Activated naive CD4-positive, alpha-beta T cell treated with anti-CD3 and anti-CD28 coated beads for 36 hours (primary cell): ENCODE measurements at regions of chr3 and their contacts with region 1.

Region 1: GRCh38 chr3:186241910-186242821 is 119.9 kb downstream of the DGKG start:
- DNase-seq: peak; percentile 87
- H3K4me3 Mint-ChIP-seq: peak overlapping the region; percentile 17
- H3K27ac Mint-ChIP-seq: no peak overlapping the region
- H3K4me1 Mint-ChIP-seq: peaks cover 7% of the 10 kb centered on the region
- H3K27me3 Mint-ChIP-seq: peaks cover 7% of the 10 kb centered on the region

Region 2: GRCh38 chr3:185488465-185488864 is 753.7 kb before region 1 on chr3:
- CTCF ChIA-PET with region 1: no interaction called
- intact Hi-C with region 1: no loop called
- DNase-seq: no peak
- H3K4me3 Mint-ChIP-seq: no peak overlapping the region
- H3K27ac Mint-ChIP-seq: no peak overlapping the region
- H3K4me1 Mint-ChIP-seq: peaks cover 2% of the 10 kb centered on the region
- H3K27me3 Mint-ChIP-seq: no peaks in the 10 kb centered on the region

Region 3: DNA sequence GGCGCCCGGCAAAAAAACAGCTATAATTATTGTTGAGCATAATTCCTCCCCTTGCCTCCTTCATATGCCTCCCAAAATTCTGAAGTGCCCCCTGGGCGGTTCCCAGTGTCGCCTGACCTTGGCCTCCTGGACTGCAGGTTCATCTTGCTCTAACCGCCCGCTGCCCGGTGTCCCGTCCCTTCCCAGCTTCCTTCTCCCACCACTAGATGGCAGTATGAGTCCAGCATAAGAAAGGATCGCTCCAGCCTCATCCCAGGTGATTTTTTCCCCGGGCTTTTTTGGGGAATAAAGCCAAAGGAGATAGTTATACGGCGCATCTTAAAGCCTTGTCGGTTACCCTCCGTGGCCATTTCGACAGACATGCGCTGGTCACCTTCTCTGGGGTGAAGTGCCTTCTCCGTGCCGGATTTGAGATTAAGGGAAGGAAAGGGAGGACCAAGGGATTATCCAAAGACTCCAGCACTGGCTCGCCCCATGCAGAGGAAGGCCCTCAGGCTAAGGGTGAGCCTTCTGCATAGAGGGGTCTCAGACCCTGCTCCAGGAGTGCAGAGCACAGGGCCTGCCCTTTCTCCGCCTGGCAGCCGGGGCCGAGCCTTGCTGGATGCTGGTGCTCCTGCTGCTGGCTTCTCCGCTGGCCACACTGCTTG is 258.5 kb before region 1 on chr3:
- CTCF ChIA-PET with region 1: interaction called, 23 read pairs
- intact Hi-C with region 1: loop called (anchors 1 kb)
- DNase-seq: peak; percentile 67
- H3K4me3 Mint-ChIP-seq: no peak overlapping the region
- H3K27ac Mint-ChIP-seq: peak overlapping the region; percentile 41
- H3K4me1 Mint-ChIP-seq: peaks cover 3% of the 10 kb centered on the region
- H3K27me3 Mint-ChIP-seq: peaks cover 8% of the 10 kb centered on the region

Region 4: DNA sequence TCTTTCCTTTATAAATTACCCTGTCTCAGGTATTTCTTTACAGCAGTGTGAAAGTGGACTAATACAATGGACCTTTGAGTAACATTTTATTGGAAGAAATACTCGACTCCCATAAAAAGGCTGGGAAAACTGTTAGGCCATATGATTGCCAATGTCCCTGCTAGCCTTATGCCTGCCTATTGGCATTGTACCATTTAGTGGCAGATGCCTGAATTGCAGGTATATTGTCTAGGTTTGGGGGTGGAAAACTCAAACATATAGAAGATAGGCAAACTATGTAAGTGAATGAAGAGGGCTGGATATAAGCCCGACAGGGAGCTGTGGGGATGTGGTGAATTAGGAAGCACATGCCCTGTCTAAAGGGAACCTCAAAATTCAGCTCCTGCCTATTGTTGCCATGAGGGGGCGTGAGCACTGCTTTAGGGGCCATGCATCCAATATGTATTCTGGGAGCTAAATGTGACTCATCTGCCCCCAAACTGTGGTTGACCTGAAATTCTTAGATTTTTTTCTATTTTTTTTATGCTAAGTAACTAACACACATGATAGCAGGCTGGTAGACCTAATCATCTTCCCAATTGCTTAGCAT is 239.2 kb before region 1 on chr3:
- CTCF ChIA-PET with region 1: no interaction called
- intact Hi-C with region 1: loop called (anchors 1 kb)
- DNase-seq: peak; percentile 36
- H3K4me3 Mint-ChIP-seq: no peak overlapping the region
- H3K27ac Mint-ChIP-seq: no peak overlapping the region
- H3K4me1 Mint-ChIP-seq: peaks cover 7% of the 10 kb centered on the region
- H3K27me3 Mint-ChIP-seq: peaks cover 11% of the 10 kb centered on the region

Region 5: GRCh38 chr3:186067360-186068242 is 174.6 kb before region 1 on chr3:
- CTCF ChIA-PET with region 1: interaction called, 5 read pairs
- intact Hi-C with region 1: loop called (anchors 5 kb)
- DNase-seq: no peak
- H3K4me3 Mint-ChIP-seq: peak overlapping the region; percentile 62
- H3K27ac Mint-ChIP-seq: peak overlapping the region; percentile 57
- H3K4me1 Mint-ChIP-seq: peaks cover 15% of the 10 kb centered on the region
- H3K27me3 Mint-ChIP-seq: peaks cover 7% of the 10 kb centered on the region

Region 6: DNA sequence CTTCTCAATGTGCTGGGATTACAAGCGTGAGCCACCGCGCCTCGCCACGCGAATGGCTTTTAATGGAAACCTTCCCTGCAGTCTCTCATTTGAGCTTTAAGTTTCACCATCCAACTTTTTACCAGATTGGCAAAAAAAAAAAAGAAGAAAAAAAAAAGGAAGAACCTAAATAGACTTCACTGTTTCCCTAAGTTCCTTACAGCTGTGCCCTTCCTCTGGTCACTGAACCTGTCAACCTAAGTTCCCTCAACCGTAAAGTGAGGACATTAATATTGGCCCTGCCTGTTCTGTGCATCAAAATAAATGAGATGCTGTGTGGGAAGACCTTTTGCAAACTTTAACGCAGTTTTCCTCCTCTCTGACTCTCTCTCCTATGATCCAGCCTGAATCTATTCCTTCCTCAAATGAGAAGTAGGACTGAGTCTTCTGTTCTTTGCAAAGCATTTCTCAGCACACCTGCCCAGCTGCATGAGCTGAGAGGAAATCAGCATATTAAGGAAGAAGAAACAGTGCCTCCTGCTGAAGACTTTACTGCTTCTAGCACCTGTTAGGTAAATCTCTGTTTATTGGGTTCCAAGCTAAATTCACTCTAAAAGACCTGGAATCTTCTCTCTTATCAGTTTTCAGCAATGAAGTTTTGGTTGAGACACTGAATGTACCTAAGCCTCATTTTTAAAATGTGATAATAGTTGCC is 33.7 kb before region 1 on chr3:
- CTCF ChIA-PET with region 1: no interaction called
- intact Hi-C with region 1: no loop called
- DNase-seq: no peak
- H3K4me3 Mint-ChIP-seq: no peak overlapping the region
- H3K27ac Mint-ChIP-seq: no peak overlapping the region
- H3K4me1 Mint-ChIP-seq: no peaks in the 10 kb centered on the region
- H3K27me3 Mint-ChIP-seq: peaks cover 3% of the 10 kb centered on the region

Region 7: GRCh38 chr3:186342197-186342596 is 100.0 kb after region 1 on chr3:
- CTCF ChIA-PET with region 1: no interaction called
- intact Hi-C with region 1: no loop called
- DNase-seq: no peak
- H3K4me3 Mint-ChIP-seq: no peak overlapping the region
- H3K27ac Mint-ChIP-seq: no peak overlapping the region
- H3K4me1 Mint-ChIP-seq: peaks cover 18% of the 10 kb centered on the region
- H3K27me3 Mint-ChIP-seq: no peaks in the 10 kb centered on the region